ENCODE measurements at regions of chr13 and their contacts with region 1.

Region 1: DNA sequence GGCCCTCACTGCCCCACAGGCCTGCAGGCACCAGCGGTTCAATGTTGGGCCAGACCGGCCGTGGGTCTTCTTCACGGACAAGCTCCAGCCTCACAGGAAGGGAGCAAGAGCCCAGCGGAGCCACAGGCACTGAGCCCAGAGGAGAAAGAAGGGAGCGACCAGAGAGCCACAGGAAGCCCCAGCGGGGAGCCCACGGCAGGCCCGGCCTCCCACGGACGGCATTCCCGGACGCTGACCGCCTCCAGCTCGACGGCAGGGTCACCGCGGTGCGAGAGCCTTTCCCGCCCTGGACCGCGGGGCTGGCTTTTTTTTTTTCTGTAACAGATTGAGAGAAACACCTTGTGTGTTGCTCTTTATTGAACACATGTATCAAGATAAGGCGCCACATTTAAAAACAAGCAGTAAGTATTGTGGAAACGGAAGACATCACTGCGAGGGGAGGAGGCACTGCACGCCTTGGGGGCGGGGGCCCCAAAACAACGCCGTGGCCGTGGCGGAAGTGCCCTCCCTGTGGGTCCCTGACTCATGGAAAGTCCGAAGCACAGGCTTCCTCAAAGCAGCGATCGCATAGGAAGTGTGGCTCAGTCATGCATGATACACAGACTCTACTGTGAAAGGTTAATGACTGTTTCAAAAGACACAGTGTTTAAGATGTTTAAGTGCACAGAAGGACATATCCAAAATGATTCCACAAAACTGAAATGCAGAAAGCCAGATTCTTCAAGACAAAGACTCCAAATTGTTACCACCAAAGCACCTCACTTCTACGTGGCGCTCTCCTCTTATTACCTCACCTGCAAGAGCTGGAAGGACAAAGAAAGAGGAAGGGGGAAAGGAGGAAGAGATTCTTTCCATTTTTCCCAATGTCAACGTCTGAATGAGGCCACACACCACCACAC is 3.5 kb downstream of the RASA3 start:
- DNase-seq: no peak
- H3K4me3 ChIP-seq: no peak overlapping the region
- H3K27ac ChIP-seq: no peak overlapping the region
- H3K4me1 ChIP-seq: peaks cover 16% of the 10 kb centered on the region
- H3K27me3 ChIP-seq: no peaks in the 10 kb centered on the region
- CTCF ChIP-seq: no peak

Region 2: GRCh38 chr13:114078461-114079451 is 50.1 kb before region 1 on chr13:
- dilution Hi-C with region 1: loop called (anchors 10 kb)
- DNase-seq: no peak
- H3K4me3 ChIP-seq: no peak overlapping the region
- H3K27ac ChIP-seq: no peak overlapping the region
- H3K4me1 ChIP-seq: peaks cover 14% of the 10 kb centered on the region
- H3K27me3 ChIP-seq: no peaks in the 10 kb centered on the region
- CTCF ChIP-seq: no peak